HEK293 (cell line): ENCODE measurements at regions of chr20 and their contacts with region 1.

Region 1: DNA sequence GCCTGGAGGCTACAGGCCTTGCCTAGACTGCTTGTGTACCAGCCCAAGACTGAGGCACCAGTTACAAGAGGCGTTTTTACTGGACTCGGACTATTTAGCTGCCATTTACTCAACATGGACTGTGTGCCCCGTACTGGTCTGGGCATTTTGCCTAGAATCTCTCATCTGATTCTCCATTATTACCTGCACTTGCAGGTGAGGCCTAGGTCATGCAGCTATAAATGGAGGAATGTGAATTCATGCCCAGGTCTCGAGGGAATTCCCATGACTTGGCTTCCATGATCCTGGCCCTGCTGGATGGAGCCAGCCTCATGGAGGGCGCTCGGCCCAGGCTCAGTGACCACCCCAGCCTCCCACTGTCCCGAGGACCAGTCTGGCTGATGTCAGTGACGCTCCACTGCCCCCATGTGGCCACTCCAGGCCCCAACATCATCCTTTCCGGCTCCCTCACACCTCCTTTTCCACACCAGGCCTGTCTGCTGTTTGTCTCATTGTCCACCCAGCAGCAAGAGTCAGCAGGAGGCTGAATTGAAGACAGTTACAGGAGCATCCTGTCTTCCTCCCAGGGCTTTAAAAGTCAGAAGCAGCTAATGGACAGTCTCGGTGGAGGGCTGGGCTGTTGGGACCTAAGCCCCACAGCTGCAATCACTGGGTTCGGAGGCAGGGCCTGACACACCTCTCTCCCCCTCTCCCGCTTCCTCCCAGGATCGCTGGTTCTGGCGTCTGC is 8.7 kb downstream of the MMP24OS start:
- H3K4me3 ChIP-seq: no peak overlapping the region
- H3K27ac ChIP-seq: no peak overlapping the region
- H3K4me1 ChIP-seq: no peaks in the 10 kb centered on the region
- CTCF ChIP-seq: peak; percentile 87

Region 2: DNA sequence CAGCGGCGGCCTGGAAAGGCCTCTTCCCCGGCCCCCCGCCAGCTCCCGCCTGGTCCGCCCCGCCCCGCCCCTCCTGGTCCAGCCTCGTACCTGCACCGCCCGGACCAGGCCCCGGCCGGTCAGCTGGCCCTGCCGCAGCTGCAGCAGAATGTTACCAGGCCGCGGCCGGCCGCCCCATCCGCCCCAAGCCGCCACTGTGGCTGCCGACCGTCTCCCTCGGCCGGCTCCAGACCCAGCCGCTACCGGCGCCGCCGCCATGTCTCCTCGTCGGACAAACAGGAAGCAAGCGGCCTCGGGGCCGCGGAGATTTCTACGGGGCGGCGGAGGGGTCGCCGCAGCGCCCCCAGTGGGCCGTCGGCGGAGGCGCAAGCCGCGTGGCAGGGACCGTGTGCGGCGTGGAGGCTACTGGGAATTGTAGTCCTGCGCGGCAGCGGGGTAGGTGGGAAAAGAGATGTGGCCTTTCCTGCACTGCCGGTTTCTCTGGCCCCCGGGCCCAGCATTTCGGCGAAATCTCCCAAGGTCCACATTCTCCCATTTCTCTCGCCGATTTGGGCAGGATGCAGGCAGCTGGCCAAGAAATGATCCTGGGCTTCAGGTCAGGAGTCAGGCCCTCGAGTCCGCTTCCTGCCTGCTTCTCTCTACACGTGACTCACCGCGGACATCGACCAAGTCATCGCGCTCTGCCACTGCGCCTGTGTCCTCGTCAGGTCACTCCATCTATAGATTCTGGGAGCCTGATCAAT is 176.5 kb before region 1 on chr20 and contains the start of gene TRPC4AP:
- CTCF ChIA-PET with region 1: interaction called, 18 read pairs
- POLR2A ChIA-PET with region 1: no interaction called
- H3K4me3 ChIP-seq: peak within 1 kb of the TSS; percentile 98
- H3K27ac ChIP-seq: peak within 1 kb of the TSS; percentile 77
- H3K4me1 ChIP-seq: peaks cover 14% of the 10 kb centered on the region
- CTCF ChIP-seq: peak; percentile 97

Region 3: DNA sequence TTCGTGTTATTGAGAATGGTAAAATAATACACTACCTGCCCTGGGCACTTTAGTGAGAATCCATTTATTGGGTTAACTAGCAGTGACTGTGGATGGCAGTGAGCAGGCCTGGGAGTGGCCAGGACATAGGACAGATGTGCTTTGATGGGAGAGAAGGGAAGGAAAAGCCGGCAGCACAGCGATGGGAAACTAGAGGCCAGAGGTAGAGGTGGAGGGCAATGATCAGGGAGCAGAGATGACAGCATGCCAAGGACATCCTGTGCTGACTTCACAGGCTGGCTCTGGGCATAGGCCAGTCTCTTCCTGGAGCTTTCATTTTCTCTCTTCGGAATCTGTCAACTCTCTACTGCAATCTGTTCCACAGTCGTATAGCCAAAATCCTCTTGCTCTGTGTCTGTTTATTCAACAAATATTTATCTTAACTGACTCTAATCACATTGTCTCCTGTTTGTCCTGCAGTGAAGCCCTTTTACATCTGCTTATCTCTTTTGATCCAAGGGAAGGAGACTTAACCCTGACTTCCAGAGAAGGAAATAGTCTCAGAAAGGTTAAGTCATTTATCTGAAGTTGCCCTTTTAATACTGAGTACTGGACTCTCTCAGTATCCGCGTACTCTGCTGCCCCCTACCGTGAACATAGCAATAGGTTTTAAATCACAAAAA is 61.1 kb before region 1 on chr20:
- CTCF ChIA-PET with region 1: interaction called, 16 read pairs
- POLR2A ChIA-PET with region 1: no interaction called
- H3K4me3 ChIP-seq: no peak overlapping the region
- H3K27ac ChIP-seq: no peak overlapping the region
- H3K4me1 ChIP-seq: no peaks in the 10 kb centered on the region
- CTCF ChIP-seq: peak; percentile 76